Heart right ventricle (tissue), 16 donors: ENCODE measurements at regions of chr1 and their contacts with region 1.

Region 1: DNA sequence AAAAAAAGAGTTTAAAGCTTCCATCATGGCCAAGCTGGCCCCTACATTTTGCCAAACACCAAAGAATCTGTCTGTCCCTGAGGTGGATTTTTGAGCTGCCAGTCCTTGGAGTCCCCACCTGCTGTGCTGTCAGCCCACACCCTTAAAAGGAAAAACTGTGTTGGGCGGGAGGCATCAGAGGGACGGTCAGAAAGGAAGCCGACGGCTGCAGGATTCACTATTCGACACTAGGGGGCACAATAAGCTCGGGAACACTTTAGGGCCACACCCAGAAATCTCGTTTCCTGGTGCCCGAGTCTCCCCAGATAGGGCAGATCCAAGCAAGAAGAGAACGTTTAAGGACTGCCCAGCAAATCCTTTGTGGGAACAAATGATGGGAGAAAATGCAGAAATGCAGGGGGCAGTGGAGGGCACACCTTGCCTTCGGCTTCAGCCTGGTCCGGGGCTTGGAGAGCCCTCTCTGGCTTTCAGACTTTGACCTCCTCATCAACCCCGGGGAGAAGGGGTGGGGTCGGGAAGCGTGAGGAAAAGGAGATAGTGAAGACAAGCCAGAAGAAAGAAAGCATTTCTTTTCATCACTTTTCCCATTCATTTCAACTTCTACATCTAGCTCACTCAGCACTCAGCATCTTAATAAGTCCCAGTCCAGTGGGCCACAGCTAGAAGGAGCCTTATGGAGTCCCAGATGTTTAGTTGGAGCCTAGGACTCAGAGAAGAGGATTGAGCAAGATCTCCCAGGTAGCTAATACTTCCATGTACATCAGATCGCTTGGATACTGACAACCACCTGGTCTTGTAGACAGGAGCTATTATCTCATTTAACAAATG is 5.0 kb upstream of the CTTNBP2NL start:
- DNase-seq: peak; percentile 77 to 92
- ATAC-seq: peak; percentile 76 to 90 (median 82)
- H3K4me3 ChIP-seq: peak overlapping the region; percentile 5 to 61 (median 52)
- H3K27ac ChIP-seq: peak overlapping the region; percentile 58 to 97 (median 88)
- H3K4me1 ChIP-seq: peaks cover 0 to 73% (median 50%) of the 10 kb centered on the region in 9 donors
- H3K27me3 ChIP-seq: no peaks in the 10 kb centered on the region
- CTCF ChIP-seq: peak; percentile 92 to 97 (median 95)

Region 2: GRCh38 chr1:112439592-112439991 is 48.6 kb after region 1 on chr1:
- intact Hi-C with region 1: loop called in 3 of 10 experiments (anchors 5 kb)
- DNase-seq: no peak
- ATAC-seq: peak in 6 of 8 donors; percentile 52 to 74 (median 67)
- H3K4me3 ChIP-seq: no peak overlapping the region
- H3K27ac ChIP-seq: peak overlapping the region; percentile 13 to 81 (median 60)
- H3K4me1 ChIP-seq: peaks cover 0 to 81% (median 39%) of the 10 kb centered on the region in 9 donors
- H3K27me3 ChIP-seq: no peaks in the 10 kb centered on the region
- CTCF ChIP-seq: no peak

Region 3: DNA sequence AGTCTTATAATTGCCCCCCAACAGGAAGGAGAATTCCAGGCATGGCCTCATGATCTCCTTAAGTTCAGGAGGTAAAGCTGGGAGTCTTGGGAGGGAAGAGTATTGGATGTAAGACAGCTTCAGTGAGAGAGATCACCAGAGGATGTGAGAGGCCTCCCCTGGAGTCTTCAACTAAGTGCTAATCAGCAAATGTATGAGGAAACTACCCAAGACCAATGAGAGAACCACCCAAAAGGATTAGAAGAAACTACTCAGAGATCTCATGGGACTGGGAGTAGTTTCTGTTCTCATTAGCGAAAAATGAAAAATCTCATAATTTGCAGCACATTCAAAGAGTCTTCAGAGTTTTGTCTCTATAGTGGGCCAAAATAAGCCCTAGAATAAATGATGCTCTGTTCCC is 81.2 kb after region 1 on chr1:
- intact Hi-C with region 1: loop called in 3 of 10 experiments (anchors 2 to 5 kb)
- DNase-seq: no peak
- ATAC-seq: no peak
- H3K4me3 ChIP-seq: no peak overlapping the region
- H3K27ac ChIP-seq: no peak overlapping the region
- H3K4me1 ChIP-seq: peaks cover 0 to 2% (median 0%) of the 10 kb centered on the region in 9 donors
- H3K27me3 ChIP-seq: no peaks in the 10 kb centered on the region
- CTCF ChIP-seq: no peak

Region 4: DNA sequence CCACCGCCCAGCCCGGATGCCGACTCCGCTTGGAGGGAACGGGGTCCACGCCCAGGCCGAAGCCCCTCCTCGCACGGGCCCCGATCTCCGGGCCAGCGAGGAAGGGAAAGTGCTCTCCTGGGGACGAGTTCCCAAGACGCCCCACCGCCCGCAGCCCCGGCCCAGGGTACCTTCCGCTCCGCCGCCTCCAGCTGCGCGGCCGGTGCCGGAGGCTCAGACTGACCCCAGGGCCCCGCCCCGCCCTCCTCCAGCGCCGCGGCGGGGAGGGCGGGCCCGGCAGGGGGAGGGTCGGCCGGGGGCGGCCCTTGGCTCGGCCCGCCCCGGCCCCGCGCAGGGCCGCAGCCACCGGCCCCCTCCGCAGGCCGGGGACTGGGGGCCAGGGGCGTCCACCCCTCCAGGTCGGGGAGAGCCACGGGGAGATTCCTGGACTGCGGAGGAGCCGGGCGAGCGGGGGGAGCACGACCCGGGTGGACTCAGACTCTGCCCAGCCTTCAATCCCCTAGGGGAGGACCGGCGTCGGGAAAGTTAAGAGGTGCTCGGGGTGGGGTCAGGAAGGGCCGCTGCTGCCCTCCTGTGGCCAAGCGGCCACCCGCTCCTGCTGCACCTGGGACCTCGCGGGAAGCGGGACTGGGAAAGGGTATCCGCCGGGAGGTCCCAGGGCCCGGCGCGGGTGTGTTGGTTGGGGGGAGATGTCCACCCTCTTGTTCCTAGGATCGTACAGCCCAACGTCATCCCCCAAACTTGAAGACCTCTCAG is 316.1 kb after region 1 on chr1 and contains the start of gene RHOC:
- intact Hi-C with region 1: loop called in 8 of 10 experiments (anchors 2 to 5 kb)
- DNase-seq: peak; percentile 88 to 92
- ATAC-seq: peak; percentile 63 to 88 (median 77)
- H3K4me3 ChIP-seq: peak within 1 kb of the TSS; percentile 89 to 100 (median 98)
- H3K27ac ChIP-seq: peak within 1 kb of the TSS; percentile 96 to 100 (median 99)
- H3K4me1 ChIP-seq: peaks cover 11 to 47% (median 44%) of the 10 kb centered on the region in 9 donors
- H3K27me3 ChIP-seq: no peaks in the 10 kb centered on the region
- CTCF ChIP-seq: peak; percentile 91 to 97 (median 95)
- total RNA-seq, gene RHOC: 115 to 225 (median 158) TPM

Region 5: GRCh38 chr1:112803906-112804762 is 413.1 kb after region 1 on chr1:
- intact Hi-C with region 1: loop called in 1 of 10 experiments (anchors 10 kb)
- DNase-seq: peak; percentile 50 to 65
- ATAC-seq: peak; percentile 82 to 90 (median 86)
- H3K4me3 ChIP-seq: no peak overlapping the region
- H3K27ac ChIP-seq: no peak overlapping the region
- H3K4me1 ChIP-seq: peaks cover 0 to 5% (median 0%) of the 10 kb centered on the region in 9 donors
- H3K27me3 ChIP-seq: no peaks in the 10 kb centered on the region
- CTCF ChIP-seq: peak; percentile 34 to 82 (median 75)